ENCODE measurements at regions of chr21 and their contacts with region 1.

Region 1: DNA sequence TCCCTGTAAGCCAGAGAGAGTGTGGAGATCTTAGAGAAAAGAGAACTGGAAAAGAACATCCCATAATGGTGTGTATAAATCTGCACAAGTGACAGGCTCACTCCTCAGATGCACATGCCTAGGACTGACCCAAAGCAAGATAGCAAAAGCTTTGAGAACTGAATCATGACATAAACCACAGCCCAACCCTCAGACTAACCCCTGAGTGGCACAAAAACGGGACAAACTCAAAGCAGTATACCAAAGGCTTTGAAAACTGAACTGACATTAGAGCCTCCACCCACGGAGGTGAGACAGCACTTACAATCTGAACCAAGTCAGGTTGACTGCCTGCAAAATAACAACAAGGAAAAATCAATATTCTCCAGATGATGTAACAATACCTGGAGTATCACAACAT is 70.8 kb downstream of the TIAM1 start:
- DNase-seq: no peak
- H3K4me3 Mint-ChIP-seq: no peak overlapping the region
- H3K27ac Mint-ChIP-seq: no peak overlapping the region
- H3K4me1 Mint-ChIP-seq: peaks cover 12% of the 10 kb centered on the region
- H3K27me3 Mint-ChIP-seq: no peaks in the 10 kb centered on the region

Region 2: GRCh38 chr21:30900881-30901280 is 372.4 kb before region 1 on chr21:
- intact Hi-C with region 1: loop called (anchors 5 kb)
- DNase-seq: no peak
- H3K4me3 Mint-ChIP-seq: no peak overlapping the region
- H3K27ac Mint-ChIP-seq: no peak overlapping the region
- H3K4me1 Mint-ChIP-seq: no peaks in the 10 kb centered on the region
- H3K27me3 Mint-ChIP-seq: peaks cover 23% of the 10 kb centered on the region

Region 3: DNA sequence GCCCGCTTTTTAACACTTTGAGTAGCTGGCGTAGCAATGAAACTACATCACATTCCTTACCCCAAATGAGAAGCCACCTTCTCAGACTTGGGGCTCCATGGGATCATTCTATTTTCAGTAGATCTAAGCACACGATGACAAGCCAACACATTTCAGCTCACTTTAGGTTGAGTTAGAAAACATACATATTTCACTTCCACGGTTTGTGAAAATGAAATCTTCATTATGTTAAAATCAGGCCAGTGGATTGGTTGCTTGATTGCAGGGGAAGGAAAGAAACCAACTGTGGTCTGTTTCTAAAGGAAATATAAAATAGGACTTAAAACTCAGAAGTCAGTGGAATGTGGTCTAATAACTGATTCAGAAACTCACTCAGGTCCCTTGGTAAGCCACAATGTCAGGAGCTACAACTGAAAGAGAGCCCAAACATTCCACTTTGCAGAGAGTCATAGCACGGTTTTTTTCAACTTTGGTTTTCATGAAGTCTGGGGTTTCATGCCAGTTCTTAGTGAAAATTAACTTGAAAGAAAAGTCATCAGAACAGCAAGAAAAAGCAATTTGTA is 153.0 kb after region 1 on chr21:
- intact Hi-C with region 1: no loop called
- DNase-seq: no peak
- H3K4me3 Mint-ChIP-seq: no peak overlapping the region
- H3K27ac Mint-ChIP-seq: no peak overlapping the region
- H3K4me1 Mint-ChIP-seq: peaks cover 13% of the 10 kb centered on the region
- H3K27me3 Mint-ChIP-seq: peaks cover 1% of the 10 kb centered on the region

Region 4: GRCh38 chr21:32214654-32215305 is 941.5 kb after region 1 on chr21:
- intact Hi-C with region 1: no loop called
- DNase-seq: no peak
- H3K4me3 Mint-ChIP-seq: no peak overlapping the region
- H3K27ac Mint-ChIP-seq: no peak overlapping the region
- H3K4me1 Mint-ChIP-seq: no peaks in the 10 kb centered on the region
- H3K27me3 Mint-ChIP-seq: peaks cover 2% of the 10 kb centered on the region